ENCODE measurements at regions of chr17 and their contacts with region 1.

Region 1: DNA sequence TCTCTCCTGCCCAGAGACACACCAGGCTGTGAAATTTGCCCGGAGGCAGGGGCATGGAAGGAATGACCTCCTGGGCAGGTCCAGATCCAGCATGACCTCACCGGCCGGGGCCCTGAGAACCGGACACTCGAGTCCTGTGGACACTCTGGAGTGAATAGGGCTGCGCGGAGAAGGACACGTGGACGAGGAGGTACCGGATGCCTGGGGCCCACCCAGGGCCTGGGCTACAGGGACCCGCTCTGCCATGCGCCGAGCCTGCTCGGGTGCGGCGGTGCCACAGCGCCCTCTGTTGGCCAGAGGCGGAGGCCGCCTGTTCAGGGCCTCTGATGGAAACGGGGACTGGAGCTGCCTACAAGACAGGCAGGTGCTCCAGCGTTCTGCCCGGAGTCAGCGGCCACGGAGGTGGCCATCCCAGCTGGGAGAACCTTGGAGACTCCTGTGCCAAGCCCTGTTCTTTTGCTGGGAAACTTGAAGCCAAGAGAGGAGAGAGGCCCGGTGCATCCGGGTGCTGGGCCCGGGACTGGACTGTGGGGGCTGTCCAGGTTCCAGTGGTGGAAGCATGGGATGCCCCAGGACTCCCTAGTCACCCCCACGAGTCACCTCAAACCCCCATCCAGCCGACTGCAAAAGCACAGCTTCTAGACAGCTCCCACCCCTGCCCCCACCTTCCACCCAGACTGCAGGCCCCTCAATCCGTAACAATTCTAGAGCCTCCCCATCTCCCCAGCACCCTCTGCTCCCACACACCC is 19.3 kb upstream of the NXPH3 start:
- DNase-seq: peak; percentile 61 to 89 (median 81)
- ATAC-seq: peak; percentile 96
- H3K4me3 ChIP-seq: no peak overlapping the region
- H3K4me3 Mint-ChIP-seq: peak overlapping the region in 1 of 10 donors; percentile 52
- H3K27ac ChIP-seq: no peak overlapping the region
- H3K27ac Mint-ChIP-seq: no peak overlapping the region
- H3K4me1 ChIP-seq: peaks cover 0 to 3% of the 10 kb centered on the region in 2 donors
- H3K4me1 Mint-ChIP-seq: peaks cover 6 to 13% (median 10%) of the 10 kb centered on the region in 7 donors
- H3K27me3 ChIP-seq: peaks cover 0 to 3% of the 10 kb centered on the region in 2 donors
- H3K27me3 Mint-ChIP-seq: peaks cover 0 to 13% (median 5%) of the 10 kb centered on the region in 5 donors

Region 2: GRCh38 chr17:49315551-49316257 is 240.7 kb before region 1 on chr17:
- CTCF ChIA-PET with region 1: interaction called, 5 read pairs
- POLR2A ChIA-PET with region 1: no interaction called
- intact Hi-C with region 1: loop called (anchors 2 to 10 kb)
- DNase-seq: peak; percentile 41 to 83 (median 75)
- ATAC-seq: peak; percentile 99
- H3K4me3 ChIP-seq: no peak overlapping the region
- H3K4me3 Mint-ChIP-seq: peak overlapping the region; percentile 3 to 86 (median 78)
- H3K27ac ChIP-seq: no peak overlapping the region
- H3K27ac Mint-ChIP-seq: peak overlapping the region; percentile 44 to 94 (median 70)
- H3K4me1 ChIP-seq: no peaks in the 10 kb centered on the region
- H3K4me1 Mint-ChIP-seq: peaks cover 16 to 40% (median 36%) of the 10 kb centered on the region in 7 donors
- H3K27me3 ChIP-seq: no peaks in the 10 kb centered on the region
- H3K27me3 Mint-ChIP-seq: no peaks in the 10 kb centered on the region

Region 3: DNA sequence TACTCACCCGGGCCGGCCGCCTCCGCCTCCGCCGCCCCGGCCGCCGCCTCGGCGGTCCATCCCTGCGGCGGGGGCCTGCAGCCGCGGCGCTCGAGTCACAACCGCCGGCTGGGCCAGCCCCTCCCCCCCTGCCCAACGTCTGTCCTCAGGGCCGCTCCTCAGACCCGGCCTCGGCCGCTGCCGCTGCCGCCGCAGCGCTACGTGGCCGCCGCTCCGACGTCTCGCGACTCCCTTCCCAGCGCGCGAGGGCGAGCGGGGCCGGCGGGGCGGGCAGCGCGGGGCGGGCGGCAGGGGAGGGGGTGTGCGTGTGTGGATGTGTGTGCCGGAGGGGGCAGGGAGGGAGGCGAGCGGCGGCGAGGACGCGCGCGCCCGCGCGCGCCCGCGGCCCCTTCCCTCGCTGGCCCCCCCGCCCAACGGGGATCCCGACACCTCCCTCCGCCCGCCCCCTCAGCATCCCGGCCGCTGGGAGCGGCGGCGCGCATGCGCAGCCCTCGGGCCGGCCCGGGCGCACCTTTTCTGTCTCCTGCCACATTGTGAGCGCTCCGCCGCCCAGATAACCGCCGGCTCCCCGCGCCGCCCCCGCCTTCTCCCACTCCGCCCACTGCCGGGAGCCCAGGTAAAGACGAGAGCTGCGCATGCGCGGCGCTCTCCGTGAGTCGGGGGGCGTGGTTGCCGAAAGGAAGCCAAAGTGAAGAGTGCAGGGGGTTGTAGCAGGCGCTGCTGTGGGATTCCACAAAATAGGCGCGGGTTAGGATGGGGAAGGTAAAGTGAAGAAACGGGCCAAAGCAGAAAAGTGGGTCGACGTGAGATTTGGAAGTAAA is 194.3 kb before region 1 on chr17 and contains the start of gene ZNF652:
- CTCF ChIA-PET with region 1: no interaction called
- POLR2A ChIA-PET with region 1: no interaction called
- intact Hi-C with region 1: no loop called
- DNase-seq: peak; percentile 86 to 98 (median 97)
- ATAC-seq: peak; percentile 81
- H3K4me3 ChIP-seq: peak within 1 kb of the TSS; percentile 67
- H3K4me3 Mint-ChIP-seq: peak within 1 kb of the TSS; percentile 88 to 99 (median 96)
- H3K27ac ChIP-seq: peak within 1 kb of the TSS; percentile 71
- H3K27ac Mint-ChIP-seq: peak within 1 kb of the TSS; percentile 92 to 97 (median 97)
- H3K4me1 ChIP-seq: peaks cover 26 to 33% of the 10 kb centered on the region in 2 donors
- H3K4me1 Mint-ChIP-seq: peaks cover 48 to 58% (median 53%) of the 10 kb centered on the region in 7 donors
- H3K27me3 ChIP-seq: no peaks in the 10 kb centered on the region
- H3K27me3 Mint-ChIP-seq: no peaks in the 10 kb centered on the region
- total RNA-seq, gene ZNF652: 33.8 to 64.4 (median 49.9) TPM

Region 4: GRCh38 chr17:49414622-49415350 is 141.6 kb before region 1 on chr17 and contains the start of gene PHB1:
- CTCF ChIA-PET with region 1: interaction called, 18 read pairs
- POLR2A ChIA-PET with region 1: no interaction called
- intact Hi-C with region 1: no loop called
- DNase-seq: peak; percentile 75 to 98 (median 93)
- ATAC-seq: peak; percentile 99
- H3K4me3 ChIP-seq: peak within 1 kb of the TSS; percentile 77
- H3K4me3 Mint-ChIP-seq: peak within 1 kb of the TSS; percentile 92 to 99 (median 96)
- H3K27ac ChIP-seq: peak within 1 kb of the TSS; percentile 77
- H3K27ac Mint-ChIP-seq: peak within 1 kb of the TSS; percentile 78 to 99 (median 92)
- H3K4me1 ChIP-seq: peaks cover 8% of the 10 kb centered on the region in 2 donors
- H3K4me1 Mint-ChIP-seq: peaks cover 11 to 30% (median 26%) of the 10 kb centered on the region in 7 donors
- H3K27me3 ChIP-seq: no peaks in the 10 kb centered on the region
- H3K27me3 Mint-ChIP-seq: peaks cover 0 to 3% (median 0%) of the 10 kb centered on the region in 5 donors
- total RNA-seq, gene PHB1: 50.0 to 186 (median 54.4) TPM

Region 5: DNA sequence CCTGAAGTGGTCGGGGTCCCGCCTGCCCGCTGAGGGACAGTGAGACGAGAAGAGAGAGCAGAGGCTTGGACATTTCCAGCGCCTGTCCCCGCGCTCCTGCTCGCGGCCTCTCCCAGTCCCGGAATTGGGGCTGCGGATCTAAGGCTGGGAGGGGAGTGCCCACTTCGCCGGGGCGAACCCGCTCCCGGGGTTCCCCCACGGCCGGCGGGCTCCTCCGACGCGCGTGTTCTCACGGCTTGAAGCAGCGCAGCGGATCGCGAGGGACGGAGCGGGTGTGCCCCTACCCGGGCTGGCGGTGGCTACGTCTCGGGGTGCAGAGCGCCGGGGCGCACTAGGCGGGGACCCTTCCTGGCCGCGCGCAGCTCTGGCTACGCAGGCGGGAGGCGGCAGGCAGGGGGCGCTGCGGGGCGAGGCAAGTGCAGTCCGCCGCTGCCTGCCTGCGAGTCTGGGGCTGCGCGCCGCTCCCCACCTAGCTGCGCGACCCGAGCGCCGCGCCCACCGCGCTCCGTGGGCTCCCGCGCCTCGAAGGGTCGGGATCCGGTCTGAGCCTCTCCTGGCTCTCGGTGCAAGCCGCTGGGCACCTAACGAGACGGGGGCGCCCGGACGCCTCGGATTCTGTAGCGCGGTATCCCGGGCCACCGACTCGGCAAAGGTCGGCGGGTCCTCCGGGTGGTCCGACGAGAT is 60.1 kb before region 1 on chr17:
- CTCF ChIA-PET with region 1: interaction called, 6 read pairs
- POLR2A ChIA-PET with region 1: interaction called, 3 read pairs
- intact Hi-C with region 1: loop called (anchors 1 kb)
- DNase-seq: peak; percentile 66 to 93 (median 83)
- ATAC-seq: peak; percentile 89
- H3K4me3 ChIP-seq: peak overlapping the region; percentile 67
- H3K4me3 Mint-ChIP-seq: peak overlapping the region; percentile 60 to 90 (median 80)
- H3K27ac ChIP-seq: no peak overlapping the region
- H3K27ac Mint-ChIP-seq: peak overlapping the region in 1 of 9 donors; percentile 31
- H3K4me1 ChIP-seq: peaks cover 27 to 29% of the 10 kb centered on the region in 2 donors
- H3K4me1 Mint-ChIP-seq: peaks cover 0 to 23% (median 22%) of the 10 kb centered on the region in 7 donors
- H3K27me3 ChIP-seq: peaks cover 5 to 30% of the 10 kb centered on the region in 2 donors
- H3K27me3 Mint-ChIP-seq: peaks cover 29 to 83% (median 34%) of the 10 kb centered on the region in 5 donors

Region 6: DNA sequence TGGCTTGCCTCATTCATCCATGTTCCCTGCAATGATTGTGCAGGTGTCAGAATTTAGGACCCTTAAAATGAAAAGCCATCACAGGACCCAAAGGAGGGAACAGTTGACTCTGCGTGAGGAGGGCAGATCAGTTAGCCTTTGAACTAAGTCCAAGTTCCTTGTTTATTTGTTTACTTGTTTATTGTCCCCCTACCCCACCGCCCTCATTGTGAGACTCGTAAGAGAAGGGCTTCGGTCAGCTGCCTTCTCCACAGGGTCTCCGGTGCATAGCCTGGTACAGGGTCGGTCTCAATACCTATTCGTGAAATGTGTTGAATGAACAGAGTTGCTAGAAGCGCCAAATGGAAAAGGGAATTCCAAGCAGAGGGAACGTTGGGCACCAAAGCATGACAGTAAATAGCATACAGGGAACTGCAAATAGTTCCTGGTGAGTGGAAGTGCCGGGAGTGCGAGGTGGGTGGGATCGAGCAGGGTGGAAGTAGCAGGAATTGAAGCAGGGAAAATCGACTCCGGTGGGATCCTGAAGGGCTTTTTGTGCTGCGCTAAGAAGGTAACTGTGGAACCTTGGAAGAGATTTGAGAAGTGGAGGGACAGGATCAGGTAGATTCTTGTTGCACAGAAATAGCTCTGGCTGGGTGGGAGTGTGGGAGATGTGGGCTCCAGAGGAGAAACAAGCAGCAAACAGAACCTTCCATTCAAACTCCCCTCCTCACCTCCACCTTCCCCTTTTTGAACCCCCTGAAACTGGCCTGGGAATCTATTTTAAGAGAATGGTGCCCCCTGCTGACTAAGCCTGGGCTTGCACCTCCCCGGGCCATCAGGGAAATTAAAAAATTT is 138.7 kb after region 1 on chr17:
- CTCF ChIA-PET with region 1: interaction called, 10 read pairs
- POLR2A ChIA-PET with region 1: interaction called, 4 read pairs
- intact Hi-C with region 1: no loop called
- DNase-seq: peak; percentile 45 to 78 (median 62)
- ATAC-seq: peak; percentile 67
- H3K4me3 ChIP-seq: no peak overlapping the region
- H3K4me3 Mint-ChIP-seq: peak overlapping the region in 6 of 10 donors; percentile 23 to 62 (median 57)
- H3K27ac ChIP-seq: no peak overlapping the region
- H3K27ac Mint-ChIP-seq: peak overlapping the region in 8 of 9 donors; percentile 76 to 92 (median 86)
- H3K4me1 ChIP-seq: peaks cover 13 to 30% of the 10 kb centered on the region in 2 donors
- H3K4me1 Mint-ChIP-seq: peaks cover 28 to 66% (median 50%) of the 10 kb centered on the region in 7 donors
- H3K27me3 ChIP-seq: no peaks in the 10 kb centered on the region
- H3K27me3 Mint-ChIP-seq: no peaks in the 10 kb centered on the region

Measured in naive thymus-derived CD4-positive, alpha-beta T cell (primary cell).